ENCODE measurements at regions of chr14 and their contacts with region 1.

Region 1: DNA sequence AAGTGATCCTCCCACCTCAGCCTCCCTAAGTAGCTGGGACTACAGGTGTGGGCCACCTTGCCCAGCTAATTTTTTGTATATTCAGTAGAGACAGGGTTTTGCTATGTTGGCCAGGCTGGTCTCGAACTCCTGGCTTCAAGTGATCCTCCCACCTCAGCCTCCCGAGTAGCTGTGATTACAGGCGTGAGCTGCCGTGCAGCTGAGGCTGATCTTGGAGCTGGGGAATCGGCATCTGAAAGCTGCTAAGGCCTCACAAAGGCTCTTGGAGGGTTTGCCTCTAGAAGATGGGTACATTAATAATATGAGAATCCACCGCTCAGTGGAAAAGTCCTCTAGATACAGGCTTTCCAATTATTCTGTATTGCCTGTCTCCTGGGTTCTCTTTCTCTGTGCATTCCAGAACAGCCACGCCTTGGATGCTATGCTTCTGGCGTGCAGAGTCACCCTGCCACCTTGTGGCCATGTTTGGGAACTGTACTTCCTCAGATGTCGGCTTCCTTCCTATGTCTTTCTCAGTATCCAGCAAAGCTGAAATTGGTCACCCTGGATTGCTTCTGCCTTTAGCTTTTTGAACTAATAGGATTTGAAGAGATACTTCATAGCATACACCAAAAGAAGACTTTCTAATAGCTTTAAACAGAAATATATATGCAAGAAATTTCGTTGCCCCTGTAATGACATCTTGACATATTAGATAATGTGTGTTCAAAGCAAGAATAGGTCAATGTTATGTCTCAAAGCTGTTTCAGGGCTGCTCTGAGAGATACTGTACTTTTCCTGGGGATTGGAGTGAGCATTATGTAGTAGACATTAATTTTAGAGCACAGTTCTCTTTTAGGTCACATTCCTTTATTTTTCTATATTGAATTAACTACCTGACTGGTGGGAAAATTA is 75.4 kb downstream of the SNAPC1 start:
- DNase-seq: peak; percentile 93
- H3K4me3 Mint-ChIP-seq: no peak overlapping the region
- H3K27ac Mint-ChIP-seq: no peak overlapping the region
- H3K4me1 Mint-ChIP-seq: peaks cover 13% of the 10 kb centered on the region
- H3K27me3 Mint-ChIP-seq: peaks cover 21% of the 10 kb centered on the region

Region 2: GRCh38 chr14:61269321-61270083 is 568.1 kb before region 1 on chr14:
- intact Hi-C with region 1: loop called (anchors 1 kb)
- DNase-seq: peak; percentile 93
- H3K4me3 Mint-ChIP-seq: peak overlapping the region; percentile 69
- H3K27ac Mint-ChIP-seq: no peak overlapping the region
- H3K4me1 Mint-ChIP-seq: peaks cover 7% of the 10 kb centered on the region
- H3K27me3 Mint-ChIP-seq: peaks cover 59% of the 10 kb centered on the region

Region 3: GRCh38 chr14:61296719-61297502 is 540.7 kb before region 1 on chr14:
- intact Hi-C with region 1: loop called (anchors 2 kb)
- DNase-seq: peak; percentile 78
- H3K4me3 Mint-ChIP-seq: no peak overlapping the region
- H3K27ac Mint-ChIP-seq: no peak overlapping the region
- H3K4me1 Mint-ChIP-seq: peaks cover 30% of the 10 kb centered on the region
- H3K27me3 Mint-ChIP-seq: no peaks in the 10 kb centered on the region

Region 4: GRCh38 chr14:61461808-61462275 is 375.7 kb before region 1 on chr14:
- intact Hi-C with region 1: loop called (anchors 1 kb)
- DNase-seq: peak; percentile 86
- H3K4me3 Mint-ChIP-seq: peak overlapping the region; percentile 28
- H3K27ac Mint-ChIP-seq: peak overlapping the region; percentile 91
- H3K4me1 Mint-ChIP-seq: peaks cover 50% of the 10 kb centered on the region
- H3K27me3 Mint-ChIP-seq: no peaks in the 10 kb centered on the region

Region 5: DNA sequence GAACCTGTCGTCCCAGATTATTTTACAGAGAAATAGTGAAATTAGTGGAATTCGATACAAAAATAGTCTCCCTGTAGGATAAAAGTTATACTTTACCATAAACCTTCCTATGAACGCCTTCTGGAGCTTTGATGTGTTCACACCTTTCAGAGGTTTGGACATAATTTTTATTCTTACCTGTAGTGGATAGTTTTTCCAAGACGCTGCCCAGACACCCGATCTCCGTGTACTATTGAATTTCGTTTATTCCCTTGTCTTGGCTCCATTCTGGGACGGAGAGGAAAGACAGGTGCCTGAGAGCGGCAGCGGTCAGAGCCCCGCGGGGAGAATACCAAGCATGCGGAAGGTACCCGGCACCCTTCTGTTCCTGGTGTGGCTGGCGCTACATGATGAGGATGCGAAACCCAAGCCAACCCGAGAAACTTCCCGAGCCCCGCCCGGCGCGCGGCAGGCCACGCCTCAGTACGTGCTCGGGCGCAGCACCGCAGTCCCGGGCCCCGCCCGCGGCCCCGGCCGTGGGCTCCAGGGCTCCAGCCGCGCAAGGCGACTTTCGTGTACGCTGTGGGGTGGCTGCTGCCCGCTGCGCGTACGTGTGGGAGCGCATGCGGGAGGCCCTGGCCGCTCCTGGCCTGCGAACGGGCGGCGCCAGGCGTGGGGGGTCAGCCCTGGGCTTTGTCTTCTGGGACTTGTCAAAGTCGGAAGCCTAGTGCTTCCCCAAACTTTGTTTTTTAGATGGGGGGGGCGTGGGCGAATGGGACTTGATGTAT is 86.7 kb before region 1 on chr14:
- intact Hi-C with region 1: loop called (anchors 5 kb)
- DNase-seq: peak; percentile 97
- H3K4me3 Mint-ChIP-seq: peak overlapping the region; percentile 98
- H3K27ac Mint-ChIP-seq: peak overlapping the region; percentile 94
- H3K4me1 Mint-ChIP-seq: peaks cover 49% of the 10 kb centered on the region
- H3K27me3 Mint-ChIP-seq: no peaks in the 10 kb centered on the region

Region 6: DNA sequence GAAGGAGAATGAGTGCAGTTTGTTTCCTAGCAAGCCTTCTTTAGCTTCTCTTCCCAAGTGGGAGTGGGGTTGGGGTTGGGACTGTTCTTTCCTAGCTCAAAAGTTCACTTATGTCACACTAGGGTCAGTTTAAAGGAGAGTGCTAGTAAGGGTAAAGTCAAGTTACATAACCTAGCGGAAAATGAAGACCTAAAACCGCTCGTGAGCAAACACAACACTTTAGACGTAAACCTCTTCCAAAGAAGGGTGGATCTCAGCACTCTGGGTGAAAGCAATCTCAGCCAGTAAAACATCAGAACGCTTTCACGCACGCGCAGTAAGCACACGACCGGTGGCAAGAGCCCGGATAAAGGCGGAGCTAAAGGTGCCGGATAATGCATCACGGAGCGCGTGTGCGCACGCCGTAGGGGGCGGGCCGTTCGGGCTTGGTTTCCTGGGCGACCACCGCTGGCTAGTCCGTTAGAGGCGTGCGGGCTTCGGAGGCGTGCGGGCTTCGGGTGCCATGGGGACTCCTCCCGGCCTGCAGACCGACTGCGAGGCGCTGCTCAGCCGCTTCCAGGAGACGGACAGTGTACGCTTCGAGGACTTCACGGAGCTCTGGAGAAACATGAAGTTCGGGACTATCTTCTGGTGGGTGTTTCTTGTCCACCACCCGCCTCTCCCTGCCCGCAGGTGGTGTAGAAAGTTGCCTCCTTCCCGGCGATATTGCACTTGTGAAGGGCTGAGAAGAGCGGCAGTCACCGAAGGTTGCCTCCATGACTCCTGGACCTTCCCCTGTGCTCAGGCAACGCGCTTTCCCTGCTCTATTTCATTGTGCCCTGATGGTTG is 75.4 kb before region 1 on chr14 and contains the start of gene SNAPC1:
- intact Hi-C with region 1: loop called (anchors 1 kb)
- DNase-seq: peak; percentile 100
- H3K4me3 Mint-ChIP-seq: peak within 1 kb of the TSS; percentile 88
- H3K27ac Mint-ChIP-seq: peak within 1 kb of the TSS; percentile 97
- H3K4me1 Mint-ChIP-seq: peaks cover 40% of the 10 kb centered on the region
- H3K27me3 Mint-ChIP-seq: no peaks in the 10 kb centered on the region
- total RNA-seq, gene SNAPC1: 12.1 and 12.3 TPM in 2 replicates